ENCODE measurements at regions of chr7 and their contacts with region 1.

Region 1: DNA sequence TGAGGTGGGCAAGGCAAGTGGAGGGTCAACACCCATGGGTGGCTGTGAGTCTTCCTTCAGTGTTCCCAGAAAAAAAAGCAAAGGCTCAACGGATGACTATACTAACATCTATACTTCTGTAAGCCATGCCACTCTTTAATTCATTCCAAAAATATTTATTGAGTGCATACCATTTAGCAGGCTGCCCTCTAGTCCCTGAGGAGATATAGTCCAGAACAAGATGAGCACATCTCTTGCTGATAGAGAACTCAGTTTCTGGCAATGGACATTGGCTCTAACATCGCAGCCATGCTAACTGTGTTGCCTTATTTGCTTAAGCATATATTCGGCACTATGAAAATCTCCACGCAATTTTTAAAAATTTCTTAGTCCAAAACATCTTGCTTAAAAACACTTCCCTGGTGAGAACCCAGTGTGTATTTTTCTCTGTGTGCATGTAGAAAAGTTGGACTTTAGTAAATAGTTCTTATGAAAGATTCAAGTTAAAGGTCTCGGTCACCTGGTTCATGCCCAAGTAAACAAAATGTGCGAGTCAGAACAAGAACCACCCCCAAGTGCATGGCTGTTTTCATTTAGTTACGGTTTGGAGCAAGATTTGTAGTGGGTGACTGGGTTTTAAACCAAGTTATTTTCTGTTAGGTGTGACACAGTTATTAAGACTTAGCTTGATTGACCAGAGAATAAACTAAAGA is 69.8 kb downstream of the MET start:
- DNase-seq: no peak
- H3K4me3 ChIP-seq: no peak overlapping the region
- H3K27ac ChIP-seq: no peak overlapping the region
- H3K4me1 ChIP-seq: no peaks in the 10 kb centered on the region
- H3K27me3 ChIP-seq: no peaks in the 10 kb centered on the region
- CTCF ChIP-seq: no peak

Region 2: GRCh38 chr7:116786791-116787443 is 45.1 kb after region 1 on chr7:
- CTCF ChIA-PET with region 1: interaction called, 12 read pairs
- POLR2A ChIA-PET with region 1: no interaction called
- intact Hi-C with region 1: no loop called
- DNase-seq: peak; percentile 61
- H3K4me3 ChIP-seq: no peak overlapping the region
- H3K27ac ChIP-seq: no peak overlapping the region
- H3K4me1 ChIP-seq: peaks cover 13% of the 10 kb centered on the region
- H3K27me3 ChIP-seq: no peaks in the 10 kb centered on the region
- CTCF ChIP-seq: peak; percentile 64

Region 3: DNA sequence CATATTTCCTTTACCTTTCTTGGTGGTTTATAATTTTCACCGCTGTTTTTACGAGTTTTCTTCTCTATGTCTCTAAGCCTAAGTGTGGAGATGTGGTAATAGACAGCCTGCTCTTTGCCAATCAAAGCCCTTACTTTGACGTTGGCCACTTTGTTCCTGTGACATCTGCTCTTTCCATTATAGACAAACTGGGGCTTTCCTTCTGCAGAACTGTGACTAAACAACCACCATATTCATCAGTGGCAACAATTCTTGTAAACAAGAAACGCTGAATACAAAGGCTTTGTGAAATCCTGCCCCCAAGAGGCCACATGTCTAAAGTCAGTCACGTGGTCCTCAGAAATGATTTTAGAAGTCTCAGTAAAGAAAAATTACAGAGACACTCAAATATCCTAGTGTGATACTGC is 61.0 kb after region 1 on chr7:
- CTCF ChIA-PET with region 1: no interaction called
- POLR2A ChIA-PET with region 1: no interaction called
- intact Hi-C with region 1: no loop called
- DNase-seq: peak; percentile 89
- H3K4me3 ChIP-seq: peak overlapping the region; percentile 6
- H3K27ac ChIP-seq: peak overlapping the region; percentile 56
- H3K4me1 ChIP-seq: peaks cover 57% of the 10 kb centered on the region
- H3K27me3 ChIP-seq: no peaks in the 10 kb centered on the region
- CTCF ChIP-seq: peak; percentile 72